ENCODE measurements at regions of chr17 and their contacts with region 1.

Region 1: DNA sequence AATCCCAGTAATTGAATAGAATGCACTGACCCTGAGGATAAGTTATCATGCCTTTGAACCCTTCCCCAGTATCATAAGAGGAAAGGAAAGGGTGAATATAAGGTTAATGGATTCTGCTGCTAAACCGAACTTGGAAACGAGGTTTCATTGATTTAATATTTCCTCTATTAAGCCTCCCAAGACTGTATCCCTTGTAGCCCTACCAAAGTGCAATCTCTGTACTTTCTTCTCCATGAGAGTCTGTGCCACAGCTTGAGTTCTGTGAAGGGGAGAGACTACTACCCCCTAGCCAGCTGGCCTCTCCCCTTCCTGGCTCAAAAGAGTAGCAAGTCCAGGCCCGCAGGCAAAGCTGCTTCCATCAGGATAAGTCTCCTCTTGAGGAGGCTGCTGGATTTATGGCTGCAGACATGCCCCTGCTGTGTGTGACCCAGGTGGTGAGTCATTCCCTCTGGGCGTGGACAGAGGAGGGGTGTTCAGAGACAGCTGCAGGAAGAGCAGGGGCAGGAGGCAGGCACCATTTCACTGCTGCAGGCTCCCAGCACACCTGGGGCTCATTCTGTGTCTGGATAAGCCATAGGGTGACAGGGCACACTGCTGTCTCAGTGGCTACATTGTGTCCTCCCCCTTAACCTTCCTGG is 58.4 kb downstream of the TOM1L2 start:
- DNase-seq: peak; percentile 97
- H3K4me3 Mint-ChIP-seq: peak overlapping the region; percentile 6
- H3K27ac Mint-ChIP-seq: no peak overlapping the region
- H3K4me1 Mint-ChIP-seq: peaks cover 14% of the 10 kb centered on the region
- H3K27me3 Mint-ChIP-seq: no peaks in the 10 kb centered on the region
- CTCF ChIP-seq: no peak

Region 2: GRCh38 chr17:17900615-17901520 is 12.9 kb before region 1 on chr17:
- CTCF ChIA-PET with region 1: interaction called, 48 read pairs
- POLR2A ChIA-PET with region 1: interaction called, 17 read pairs
- intact Hi-C with region 1: no loop called
- DNase-seq: peak; percentile 96
- H3K4me3 Mint-ChIP-seq: peak overlapping the region; percentile 12
- H3K27ac Mint-ChIP-seq: no peak overlapping the region
- H3K4me1 Mint-ChIP-seq: peaks cover 13% of the 10 kb centered on the region
- H3K27me3 Mint-ChIP-seq: no peaks in the 10 kb centered on the region
- CTCF ChIP-seq: no peak

Region 3: GRCh38 chr17:17966399-17966798 is 52.6 kb after region 1 on chr17:
- CTCF ChIA-PET with region 1: no interaction called
- POLR2A ChIA-PET with region 1: no interaction called
- intact Hi-C with region 1: no loop called
- DNase-seq: no peak
- H3K4me3 Mint-ChIP-seq: no peak overlapping the region
- H3K27ac Mint-ChIP-seq: peak overlapping the region; percentile 63
- H3K4me1 Mint-ChIP-seq: peaks cover 19% of the 10 kb centered on the region
- H3K27me3 Mint-ChIP-seq: no peaks in the 10 kb centered on the region
- CTCF ChIP-seq: no peak